GM12878 (cell line): ENCODE measurements at regions of chr18 and their contacts with region 1.

Region 1: DNA sequence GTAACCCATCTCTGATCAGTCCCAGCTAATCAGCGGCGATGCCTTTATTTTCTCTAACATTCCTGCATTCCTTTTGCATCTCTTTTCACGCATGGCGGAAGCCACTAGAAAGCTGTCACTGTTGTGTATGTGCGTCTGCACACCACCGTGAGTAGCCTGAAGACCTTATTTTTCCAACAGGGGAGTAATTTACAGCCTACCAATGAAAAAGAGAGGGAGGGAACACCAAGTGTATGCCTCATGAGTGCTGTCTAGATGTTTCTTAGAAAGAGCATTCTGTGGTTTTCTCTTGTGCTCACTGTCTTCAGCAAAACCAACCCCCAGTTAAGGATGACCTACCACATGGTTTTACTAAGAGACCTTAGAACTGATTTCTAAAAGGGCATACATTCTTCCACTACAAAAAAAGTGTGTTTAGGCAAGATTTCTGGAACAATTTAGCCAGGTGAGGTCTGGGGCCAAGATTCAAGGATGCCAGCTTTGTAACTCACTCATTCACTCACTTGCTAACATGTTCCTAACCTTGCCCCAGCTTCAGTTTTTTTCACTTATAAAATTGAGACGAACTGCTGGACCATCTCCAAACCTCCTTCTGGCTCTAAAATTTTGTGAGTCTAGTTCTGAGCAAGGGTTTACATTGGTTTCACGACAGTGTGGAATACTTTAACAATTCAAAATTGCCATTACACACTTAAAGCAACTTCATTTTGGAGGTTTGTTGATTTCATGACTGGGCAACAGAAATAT is 51.4 kb downstream of the BCL2 start:
- DNase-seq: no peak
- ATAC-seq: peak; percentile 84
- H3K4me3 ChIP-seq: 0 out of 2 replicates have a peak overlapping the region, but pooled peaks have one; percentile 2
- H3K27ac ChIP-seq: peak overlapping the region; percentile 29
- H3K4me1 ChIP-seq: peaks cover 12% of the 10 kb centered on the region
- H3K27me3 ChIP-seq: no peaks in the 10 kb centered on the region
- CTCF ChIP-seq: no peak
- EP300 ChIP-seq: no peak
- POLR2A ChIP-seq: no peak
- RAD21 ChIP-seq: no peak

Region 2: DNA sequence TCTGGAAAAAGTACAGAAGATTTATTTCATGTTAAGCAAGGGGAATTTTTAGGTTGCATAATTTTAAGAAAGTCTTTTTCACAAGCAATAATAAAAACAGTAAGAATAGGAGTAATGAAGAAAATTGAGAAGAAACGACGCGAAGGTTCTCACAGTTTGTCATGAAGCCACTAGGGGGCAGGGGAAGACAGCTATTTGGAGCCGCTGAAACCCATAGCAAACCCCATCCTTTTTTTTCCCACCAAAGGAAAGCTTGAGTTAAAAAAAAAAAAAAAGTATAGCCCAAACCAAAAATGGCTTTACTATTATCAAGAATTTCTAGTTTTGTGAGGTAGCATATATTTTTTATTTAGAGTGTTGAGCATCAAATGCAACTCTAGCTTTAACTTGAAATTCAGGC is 251.9 kb before region 1 on chr18:
- CTCF ChIA-PET with region 1: no interaction called
- POLR2A ChIA-PET with region 1: no interaction called
- RAD21 ChIA-PET with region 1: no interaction called
- SMC1A ChIA-PET with region 1: no interaction called
- in situ Hi-C with region 1: no loop called
- intact Hi-C with region 1: no loop called
- DNase-seq: peak; percentile 21
- ATAC-seq: peak; percentile 92
- H3K4me3 ChIP-seq: no peak overlapping the region
- H3K27ac ChIP-seq: no peak overlapping the region
- H3K4me1 ChIP-seq: no peaks in the 10 kb centered on the region
- H3K27me3 ChIP-seq: no peaks in the 10 kb centered on the region
- CTCF ChIP-seq: peak; percentile 72 to 88 (median 72)
- EP300 ChIP-seq: no peak
- POLR2A ChIP-seq: no peak
- RAD21 ChIP-seq: peak; percentile 99

Region 3: DNA sequence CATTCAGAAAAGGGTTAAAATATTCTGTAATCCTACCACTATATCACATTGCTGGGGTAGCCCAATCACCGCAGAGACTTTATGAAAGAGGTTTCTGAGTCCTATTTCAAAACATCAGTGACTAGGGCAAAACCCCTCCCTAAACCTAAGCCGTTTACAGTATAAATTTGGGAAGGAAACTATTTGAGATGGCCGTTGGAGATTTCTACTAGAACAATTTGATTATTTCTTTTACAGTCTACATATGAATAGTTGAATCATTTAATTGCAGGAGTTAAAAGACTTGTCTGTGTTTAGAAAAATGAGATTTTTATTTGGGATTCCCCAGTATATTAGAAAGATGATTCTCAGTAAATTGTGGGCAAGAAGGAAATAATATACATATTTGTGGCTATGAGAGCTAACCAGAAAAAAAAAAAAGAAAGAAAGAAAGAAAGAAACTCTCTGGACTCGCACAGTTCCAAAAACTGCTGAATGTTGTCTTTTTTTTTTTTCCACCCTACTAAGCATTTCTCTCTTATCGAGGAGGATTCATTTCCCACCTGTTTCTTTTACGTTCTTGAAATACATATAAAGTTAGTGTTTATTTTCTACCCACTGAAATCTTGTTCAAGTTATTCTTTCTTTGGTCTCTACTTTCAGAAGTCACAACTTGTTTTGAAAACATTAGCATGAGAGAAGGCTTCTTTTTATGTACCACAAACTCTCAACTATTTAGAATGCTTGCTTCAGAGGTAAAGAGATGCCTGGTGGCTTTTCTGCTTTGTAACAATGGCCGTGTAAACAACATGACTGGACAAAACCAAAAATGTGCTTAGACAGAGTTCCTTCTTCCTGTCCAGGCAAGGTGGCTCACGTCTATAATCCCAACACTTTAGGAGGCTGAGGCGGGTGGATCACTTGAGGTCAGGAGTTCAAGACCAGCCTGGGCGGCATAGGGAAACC is 14.4 kb before region 1 on chr18:
- CTCF ChIA-PET with region 1: interaction called, 36 read pairs
- POLR2A ChIA-PET with region 1: interaction called, 3 read pairs
- RAD21 ChIA-PET with region 1: interaction called, 4 read pairs
- SMC1A ChIA-PET with region 1: interaction called, 5 read pairs
- in situ Hi-C with region 1: no loop called
- intact Hi-C with region 1: no loop called
- DNase-seq: no peak
- ATAC-seq: peak; percentile 24
- H3K4me3 ChIP-seq: peak overlapping the region; percentile 22; the same call in 1 of the 2 replicates
- H3K27ac ChIP-seq: peak overlapping the region; percentile 64
- H3K4me1 ChIP-seq: peaks cover 35% of the 10 kb centered on the region
- H3K27me3 ChIP-seq: no peaks in the 10 kb centered on the region
- CTCF ChIP-seq: no peak
- EP300 ChIP-seq: no peak
- POLR2A ChIP-seq: no peak
- RAD21 ChIP-seq: no peak

Region 4: GRCh38 chr18:63284827-63285733 is 16.9 kb after region 1 on chr18:
- CTCF ChIA-PET with region 1: interaction called, 8 read pairs
- POLR2A ChIA-PET with region 1: interaction called, 9 read pairs
- RAD21 ChIA-PET with region 1: no interaction called
- SMC1A ChIA-PET with region 1: interaction called, 14 read pairs
- in situ Hi-C with region 1: no loop called
- intact Hi-C with region 1: no loop called
- DNase-seq: peak; percentile 66
- ATAC-seq: peak; percentile 94
- H3K4me3 ChIP-seq: peak overlapping the region; percentile 25
- H3K27ac ChIP-seq: peak overlapping the region; percentile 73
- H3K4me1 ChIP-seq: peaks cover 57% of the 10 kb centered on the region
- H3K27me3 ChIP-seq: no peaks in the 10 kb centered on the region
- CTCF ChIP-seq: no peak
- EP300 ChIP-seq: no peak
- POLR2A ChIP-seq: peak; percentile 65
- RAD21 ChIP-seq: no peak